B cell (primary cell): ENCODE measurements at regions of chr7 and their contacts with region 1.

Region 1: DNA sequence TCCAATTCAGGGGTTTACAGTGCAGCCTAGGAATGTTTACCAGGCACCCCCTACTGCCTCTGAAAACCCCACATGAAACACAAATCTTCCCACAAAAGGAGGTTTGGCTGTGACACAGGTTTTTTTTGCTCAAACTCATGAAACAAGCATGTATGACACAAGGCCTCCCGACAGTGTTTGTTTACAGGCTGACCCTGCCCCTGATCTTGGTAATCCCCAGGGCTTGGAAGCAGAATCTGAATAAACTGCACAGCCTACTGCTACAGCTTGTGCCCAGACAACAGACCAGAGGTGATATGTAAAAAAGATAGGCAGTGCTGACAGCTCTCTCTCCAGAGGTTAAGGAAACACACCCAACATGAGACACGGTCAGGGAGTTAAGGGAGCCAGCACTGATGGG is 184.2 kb downstream of the KMT2E start:
- DNase-seq: no peak
- ATAC-seq: no peak
- H3K4me3 ChIP-seq: no peak overlapping the region
- H3K4me3 Mint-ChIP-seq: no peak overlapping the region
- H3K27ac ChIP-seq: no peak overlapping the region
- H3K27ac Mint-ChIP-seq: no peak overlapping the region
- H3K4me1 ChIP-seq: peaks cover 4 to 6% of the 10 kb centered on the region in 2 donors
- H3K4me1 Mint-ChIP-seq: peaks cover 27% of the 10 kb centered on the region
- H3K27me3 ChIP-seq: no peaks in the 10 kb centered on the region
- H3K27me3 Mint-ChIP-seq: no peaks in the 10 kb centered on the region
- CTCF ChIP-seq: no peak

Region 2: GRCh38 chr7:104664653-104665052 is 533.6 kb before region 1 on chr7:
- CTCF ChIA-PET with region 1: no interaction called
- POLR2A ChIA-PET with region 1: no interaction called
- intact Hi-C with region 1: no loop called
- DNase-seq: no peak
- ATAC-seq: no peak
- H3K4me3 ChIP-seq: no peak overlapping the region
- H3K4me3 Mint-ChIP-seq: no peak overlapping the region
- H3K27ac ChIP-seq: no peak overlapping the region
- H3K27ac Mint-ChIP-seq: no peak overlapping the region
- H3K4me1 ChIP-seq: no peaks in the 10 kb centered on the region
- H3K4me1 Mint-ChIP-seq: no peaks in the 10 kb centered on the region
- H3K27me3 ChIP-seq: no peaks in the 10 kb centered on the region
- H3K27me3 Mint-ChIP-seq: no peaks in the 10 kb centered on the region
- CTCF ChIP-seq: no peak

Region 3: DNA sequence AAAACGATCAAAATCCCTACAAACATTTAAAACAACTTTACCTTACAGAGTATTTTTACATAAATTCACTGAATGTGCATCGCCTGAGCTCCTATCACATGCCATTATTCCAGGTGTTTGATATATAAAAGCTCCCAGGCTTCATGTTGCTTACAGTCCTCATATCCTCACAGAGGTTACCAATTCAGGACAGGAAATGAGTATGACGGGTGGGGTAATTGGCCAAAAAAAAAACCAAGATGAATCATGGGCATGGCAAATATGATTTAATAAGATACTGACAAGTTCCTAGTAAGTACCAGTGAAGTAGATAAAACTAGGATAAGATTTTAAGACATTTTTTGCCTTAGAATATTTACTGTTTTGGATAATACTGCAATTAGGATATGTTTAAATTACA is 48.4 kb before region 1 on chr7:
- CTCF ChIA-PET with region 1: no interaction called
- POLR2A ChIA-PET with region 1: no interaction called
- intact Hi-C with region 1: loop called (anchors 5 kb)
- DNase-seq: no peak
- ATAC-seq: no peak
- H3K4me3 ChIP-seq: no peak overlapping the region
- H3K4me3 Mint-ChIP-seq: no peak overlapping the region
- H3K27ac ChIP-seq: no peak overlapping the region
- H3K27ac Mint-ChIP-seq: no peak overlapping the region
- H3K4me1 ChIP-seq: no peaks in the 10 kb centered on the region
- H3K4me1 Mint-ChIP-seq: no peaks in the 10 kb centered on the region
- H3K27me3 ChIP-seq: no peaks in the 10 kb centered on the region
- H3K27me3 Mint-ChIP-seq: no peaks in the 10 kb centered on the region
- CTCF ChIP-seq: no peak